ENCODE measurements at regions of chr9 and their contacts with region 1.

Region 1: GRCh38 chr9:114405294-114406034 is 17.7 kb upstream of the AKNA start:
- DNase-seq: peak; percentile 73
- ATAC-seq: peak; percentile 98
- H3K4me3 Mint-ChIP-seq: no peak overlapping the region
- H3K27ac Mint-ChIP-seq: peak overlapping the region; percentile 62
- H3K4me1 Mint-ChIP-seq: peaks cover 16% of the 10 kb centered on the region
- H3K27me3 Mint-ChIP-seq: no peaks in the 10 kb centered on the region

Region 2: GRCh38 chr9:114335745-114336144 is 69.7 kb before region 1 on chr9:
- POLR2A ChIA-PET with region 1: no interaction called
- DNase-seq: no peak
- ATAC-seq: no peak
- H3K4me3 Mint-ChIP-seq: no peak overlapping the region
- H3K27ac Mint-ChIP-seq: no peak overlapping the region
- H3K4me1 Mint-ChIP-seq: peaks cover 14% of the 10 kb centered on the region
- H3K27me3 Mint-ChIP-seq: no peaks in the 10 kb centered on the region

Region 3: GRCh38 chr9:114653556-114654159 is 248.2 kb after region 1 on chr9:
- POLR2A ChIA-PET with region 1: interaction called, 13 read pairs
- DNase-seq: peak; percentile 68
- ATAC-seq: peak; percentile 70
- H3K4me3 Mint-ChIP-seq: no peak overlapping the region
- H3K27ac Mint-ChIP-seq: no peak overlapping the region
- H3K4me1 Mint-ChIP-seq: peaks cover 16% of the 10 kb centered on the region
- H3K27me3 Mint-ChIP-seq: no peaks in the 10 kb centered on the region

Measured in activated naive CD8-positive, alpha-beta T cell treated with anti-CD3 and anti-CD28 coated beads, Interleukin-2, amount 10 ng/mL, durations not matched to agents 7 days and 5 days (primary cell).